ENCODE measurements at regions of chr3 and their contacts with region 1.

Region 1: GRCh38 chr3:146065573-146066006 is 95.4 kb downstream of the PLOD2 start:
- DNase-seq: peak; percentile 9
- H3K4me3 ChIP-seq: no peak overlapping the region
- H3K27me3 ChIP-seq: no peaks in the 10 kb centered on the region
- CTCF ChIP-seq: peak; percentile 55

Region 2: DNA sequence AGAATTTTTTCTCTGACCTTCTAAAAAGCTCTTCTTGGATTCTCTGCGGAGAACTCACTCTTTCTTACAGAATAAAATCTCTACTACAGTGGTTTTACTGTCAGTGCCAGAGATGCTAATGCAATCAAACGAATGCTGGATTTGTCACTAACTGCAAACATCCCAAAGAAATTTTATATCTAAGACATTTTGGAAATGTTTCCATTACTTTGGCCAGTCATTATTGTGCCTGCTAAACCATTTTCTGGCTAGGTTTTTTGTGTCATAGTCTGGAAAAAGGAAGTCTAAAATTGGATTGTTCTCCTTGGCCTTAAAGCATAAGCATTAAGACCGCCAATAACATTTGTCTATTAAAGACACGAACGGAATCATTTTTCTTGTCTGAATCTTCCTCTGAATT is 41.4 kb after region 1 on chr3:
- CTCF ChIA-PET with region 1: no interaction called
- POLR2A ChIA-PET with region 1: no interaction called
- DNase-seq: no peak
- H3K4me3 ChIP-seq: no peak overlapping the region
- H3K27me3 ChIP-seq: no peaks in the 10 kb centered on the region
- CTCF ChIP-seq: no peak

Region 3: GRCh38 chr3:146156095-146156494 is 90.5 kb after region 1 on chr3:
- CTCF ChIA-PET with region 1: interaction called, 11 read pairs
- POLR2A ChIA-PET with region 1: interaction called, 4 read pairs
- DNase-seq: no peak
- H3K4me3 ChIP-seq: no peak overlapping the region
- H3K27me3 ChIP-seq: no peaks in the 10 kb centered on the region
- CTCF ChIP-seq: no peak

Region 4: DNA sequence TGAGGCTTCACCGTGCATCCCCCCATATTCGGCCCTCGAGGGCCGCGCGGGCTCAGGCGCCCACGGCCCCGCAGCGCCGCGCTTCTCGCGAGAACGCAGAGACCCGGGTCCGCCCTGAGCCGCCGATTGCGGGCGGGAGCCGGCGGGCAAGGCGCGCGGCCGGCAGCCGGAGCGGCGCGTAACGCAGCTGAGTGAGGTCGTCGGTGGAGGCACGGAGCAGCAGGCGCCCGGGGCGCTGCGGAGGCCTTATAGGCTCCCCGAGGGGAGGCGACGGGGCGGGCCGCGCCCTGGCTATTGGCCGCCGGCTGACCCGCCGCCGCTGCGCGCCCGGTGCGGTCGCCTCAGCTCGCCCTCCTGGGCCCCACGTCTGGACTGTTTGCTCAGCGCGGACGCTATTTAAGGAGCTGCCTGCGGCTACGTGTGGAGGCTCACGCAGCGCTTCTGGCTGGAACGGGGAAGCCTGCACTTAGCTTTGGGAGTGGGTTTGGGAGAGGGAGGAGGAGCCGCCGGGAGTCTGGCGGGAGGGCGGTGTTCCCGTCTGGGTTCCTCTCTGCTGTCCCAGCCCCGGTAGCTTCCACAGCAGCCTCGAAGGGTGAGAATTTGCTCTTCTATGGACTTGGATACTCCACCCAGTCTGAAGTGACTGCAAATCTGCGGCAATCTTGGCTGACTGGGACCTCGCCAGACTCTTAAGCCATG is 95.5 kb after region 1 on chr3 and contains the start of gene PLOD2:
- CTCF ChIA-PET with region 1: interaction called, 11 read pairs
- POLR2A ChIA-PET with region 1: interaction called, 4 read pairs
- DNase-seq: peak; percentile 51
- H3K4me3 ChIP-seq: peak within 1 kb of the TSS; percentile 87
- H3K27me3 ChIP-seq: no peaks in the 10 kb centered on the region
- CTCF ChIP-seq: no peak
- polyA plus RNA-seq, gene PLOD2: 33.2 and 85.8 TPM in 2 replicates

Measured in BJ (cell line).